ENCODE measurements at regions of chr21 and their contacts with region 1.

Region 1: DNA sequence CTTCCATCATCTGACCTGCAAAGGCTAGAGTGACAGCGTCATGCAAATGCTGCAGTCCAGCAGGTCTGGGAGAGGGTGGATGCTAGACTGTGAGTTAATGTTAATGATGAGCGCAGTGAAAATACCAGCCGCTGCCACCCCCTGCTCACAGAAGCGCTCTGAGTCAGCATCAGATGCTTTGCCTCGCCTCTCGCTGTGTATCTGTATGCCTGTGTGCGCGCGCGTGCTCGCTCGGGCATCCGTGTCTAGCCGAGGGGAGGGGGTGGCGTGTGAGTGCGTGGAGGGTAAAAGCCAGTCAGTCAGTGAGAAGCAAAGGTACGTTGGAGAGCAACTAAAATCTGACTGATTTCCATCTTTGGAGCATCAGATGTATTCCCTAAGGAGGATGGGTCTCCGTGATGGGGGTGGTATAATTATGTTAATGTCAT is 858.7 kb downstream of the USP25 start:
- DNase-seq: peak; percentile 78 to 95 (median 93)
- H3K4me3 ChIP-seq: peak overlapping the region; percentile 25 to 74 (median 59)
- H3K27ac ChIP-seq: peak overlapping the region; percentile 40 to 98 (median 96)
- H3K27me3 ChIP-seq: no peaks in the 10 kb centered on the region
- CTCF ChIP-seq: peak in 5 of 56 donors; percentile 7 to 29 (median 11)

Region 2: GRCh38 chr21:16454399-16454798 is 134.0 kb before region 1 on chr21:
- intact Hi-C with region 1: loop called in 1 of 2 experiments (anchors 10 kb)
- DNase-seq: no peak
- H3K4me3 ChIP-seq: no peak overlapping the region
- H3K27ac ChIP-seq: peak overlapping the region in 1 of 59 donors; percentile 36
- H3K27me3 ChIP-seq: no peaks in the 10 kb centered on the region
- CTCF ChIP-seq: peak in 44 of 56 donors; percentile 11 to 57 (median 34)

Region 3: DNA sequence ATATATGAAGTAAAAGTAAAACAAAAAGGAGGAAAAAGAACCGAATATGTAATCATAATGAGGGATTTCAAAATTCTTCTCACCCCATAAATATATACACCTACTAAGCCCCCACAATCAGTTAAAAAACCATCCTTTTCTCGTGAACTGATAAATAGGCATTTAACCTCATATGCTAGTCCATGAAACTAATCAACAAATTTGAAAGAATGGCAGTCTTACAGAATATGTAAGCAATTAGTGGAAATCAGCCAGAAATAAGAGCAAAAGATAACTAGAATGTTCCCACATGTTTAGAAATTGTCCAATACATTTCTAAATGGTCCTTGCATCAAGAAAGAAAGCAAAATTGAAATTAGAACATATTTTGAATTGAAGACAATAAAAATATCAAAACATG is 75.0 kb after region 1 on chr21:
- intact Hi-C with region 1: no loop called
- DNase-seq: no peak
- H3K4me3 ChIP-seq: no peak overlapping the region
- H3K27ac ChIP-seq: no peak overlapping the region
- H3K27me3 ChIP-seq: no peaks in the 10 kb centered on the region
- CTCF ChIP-seq: no peak